B cell (primary cell): ENCODE measurements at regions of chr18 and their contacts with region 1.

Region 1: GRCh38 chr18:62249478-62250097 is 62.5 kb downstream of the RELCH start:
- DNase-seq: peak; percentile 71
- ATAC-seq: peak; percentile 41
- H3K4me3 ChIP-seq: no peak overlapping the region
- H3K4me3 Mint-ChIP-seq: no peak overlapping the region
- H3K27ac ChIP-seq: no peak overlapping the region
- H3K27ac Mint-ChIP-seq: no peak overlapping the region
- H3K4me1 ChIP-seq: no peaks in the 10 kb centered on the region
- H3K4me1 Mint-ChIP-seq: no peaks in the 10 kb centered on the region
- H3K27me3 ChIP-seq: no peaks in the 10 kb centered on the region
- H3K27me3 Mint-ChIP-seq: no peaks in the 10 kb centered on the region
- CTCF ChIP-seq: peak; percentile 89

Region 2: GRCh38 chr18:62198259-62198658 is 51.3 kb before region 1 on chr18:
- CTCF ChIA-PET with region 1: interaction called, 12 read pairs
- POLR2A ChIA-PET with region 1: no interaction called
- intact Hi-C with region 1: no loop called
- DNase-seq: no peak
- ATAC-seq: no peak
- H3K4me3 ChIP-seq: no peak overlapping the region
- H3K4me3 Mint-ChIP-seq: no peak overlapping the region
- H3K27ac ChIP-seq: no peak overlapping the region
- H3K27ac Mint-ChIP-seq: no peak overlapping the region
- H3K4me1 ChIP-seq: peaks cover 0 to 4% of the 10 kb centered on the region in 2 donors
- H3K4me1 Mint-ChIP-seq: peaks cover 52% of the 10 kb centered on the region
- H3K27me3 ChIP-seq: no peaks in the 10 kb centered on the region
- H3K27me3 Mint-ChIP-seq: no peaks in the 10 kb centered on the region
- CTCF ChIP-seq: no peak

Region 3: GRCh38 chr18:62300359-62300963 is 50.9 kb after region 1 on chr18:
- CTCF ChIA-PET with region 1: interaction called, 10 read pairs
- POLR2A ChIA-PET with region 1: no interaction called
- intact Hi-C with region 1: no loop called
- DNase-seq: no peak
- ATAC-seq: no peak
- H3K4me3 ChIP-seq: no peak overlapping the region
- H3K4me3 Mint-ChIP-seq: no peak overlapping the region
- H3K27ac ChIP-seq: no peak overlapping the region
- H3K27ac Mint-ChIP-seq: no peak overlapping the region
- H3K4me1 ChIP-seq: peaks cover 0 to 5% of the 10 kb centered on the region in 2 donors
- H3K4me1 Mint-ChIP-seq: peaks cover 11% of the 10 kb centered on the region
- H3K27me3 ChIP-seq: no peaks in the 10 kb centered on the region
- H3K27me3 Mint-ChIP-seq: no peaks in the 10 kb centered on the region
- CTCF ChIP-seq: no peak

Region 4: GRCh38 chr18:62479574-62479973 is 230.0 kb after region 1 on chr18:
- CTCF ChIA-PET with region 1: no interaction called
- POLR2A ChIA-PET with region 1: no interaction called
- intact Hi-C with region 1: no loop called
- DNase-seq: no peak
- ATAC-seq: no peak
- H3K4me3 ChIP-seq: no peak overlapping the region
- H3K4me3 Mint-ChIP-seq: no peak overlapping the region
- H3K27ac ChIP-seq: no peak overlapping the region
- H3K27ac Mint-ChIP-seq: no peak overlapping the region
- H3K4me1 ChIP-seq: no peaks in the 10 kb centered on the region
- H3K4me1 Mint-ChIP-seq: no peaks in the 10 kb centered on the region
- H3K27me3 ChIP-seq: peaks cover 0 to 13% (median 3%) of the 10 kb centered on the region in 4 experiments
- H3K27me3 Mint-ChIP-seq: peaks cover 30% of the 10 kb centered on the region
- CTCF ChIP-seq: no peak